WTC11 (cell line): ENCODE measurements at regions of chrX and their contacts with region 1.

Region 1: GRCh38 chrX:152658302-152658701 is 20.6 kb downstream of the GABRQ start:
- DNase-seq: peak; percentile 38
- ATAC-seq: peak; percentile 82
- H3K4me3 Mint-ChIP-seq: no peak overlapping the region
- H3K27ac Mint-ChIP-seq: no peak overlapping the region
- H3K4me1 Mint-ChIP-seq: no peaks in the 10 kb centered on the region
- H3K27me3 Mint-ChIP-seq: no peaks in the 10 kb centered on the region
- CTCF ChIP-seq: no peak

Region 2: GRCh38 chrX:151753313-151754041 is 904.8 kb before region 1 on chrX:
- CTCF ChIA-PET with region 1: interaction called, 10 read pairs
- POLR2A ChIA-PET with region 1: no interaction called
- DNase-seq: peak; percentile 60
- ATAC-seq: peak; percentile 82
- H3K4me3 Mint-ChIP-seq: no peak overlapping the region
- H3K27ac Mint-ChIP-seq: no peak overlapping the region
- H3K4me1 Mint-ChIP-seq: peaks cover 19% of the 10 kb centered on the region
- H3K27me3 Mint-ChIP-seq: peaks cover 6% of the 10 kb centered on the region
- CTCF ChIP-seq: peak; percentile 68

Region 3: DNA sequence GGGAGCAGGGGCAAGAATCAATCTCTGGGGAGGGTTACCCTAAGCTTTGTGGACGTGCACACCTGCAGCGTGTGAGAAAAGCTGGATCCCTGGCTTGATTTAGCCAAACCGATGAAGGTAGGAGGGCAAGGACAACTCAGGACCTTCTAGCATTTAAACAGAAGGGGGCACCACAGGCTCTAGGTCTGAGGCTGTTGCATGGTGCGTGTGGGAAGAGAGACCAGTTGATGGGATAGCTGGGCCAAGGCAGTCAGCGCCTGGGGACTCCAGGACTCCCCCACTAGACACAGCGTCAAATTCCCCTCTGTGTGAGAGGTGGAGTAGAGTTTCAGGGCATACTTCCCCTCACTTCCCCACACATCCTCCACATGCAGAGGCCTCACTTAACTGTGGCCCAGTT is 16.3 kb before region 1 on chrX:
- CTCF ChIA-PET with region 1: interaction called, 41 read pairs
- POLR2A ChIA-PET with region 1: no interaction called
- DNase-seq: peak; percentile 21
- ATAC-seq: peak; percentile 33
- H3K4me3 Mint-ChIP-seq: no peak overlapping the region
- H3K27ac Mint-ChIP-seq: no peak overlapping the region
- H3K4me1 Mint-ChIP-seq: peaks cover 41% of the 10 kb centered on the region
- H3K27me3 Mint-ChIP-seq: peaks cover 16% of the 10 kb centered on the region
- CTCF ChIP-seq: no peak

Region 4: DNA sequence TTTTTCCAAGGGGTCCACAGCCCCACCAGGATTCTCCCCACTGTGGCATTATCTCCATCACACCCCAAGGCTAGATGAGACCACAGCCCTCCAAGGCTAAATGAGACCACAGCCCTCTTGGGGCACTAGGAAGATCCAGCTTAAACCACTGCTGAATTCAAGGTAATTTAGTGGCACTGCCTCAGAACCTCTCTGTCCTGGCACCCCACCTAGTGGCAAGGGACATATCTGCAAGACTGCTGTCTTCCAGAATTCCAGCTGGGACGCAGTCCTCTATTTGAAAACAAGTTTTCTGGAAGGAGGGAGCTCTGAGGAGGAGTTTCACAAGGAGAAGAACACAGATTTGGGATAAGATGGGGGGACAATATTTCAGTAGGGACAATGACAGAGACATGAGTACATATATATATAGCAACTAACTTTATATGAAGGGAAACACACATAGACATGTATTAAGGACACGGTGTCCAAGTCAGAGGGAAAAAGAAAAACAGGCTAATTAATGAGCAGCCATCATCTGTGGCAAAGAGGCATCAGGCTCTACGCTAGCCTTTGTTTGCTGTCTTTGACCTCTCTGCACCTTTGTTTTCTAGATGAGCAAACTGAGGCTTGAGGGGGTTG is 163.0 kb after region 1 on chrX:
- CTCF ChIA-PET with region 1: interaction called, 23 read pairs
- POLR2A ChIA-PET with region 1: no interaction called
- DNase-seq: peak; percentile 65
- ATAC-seq: peak; percentile 85
- H3K4me3 Mint-ChIP-seq: no peak overlapping the region
- H3K27ac Mint-ChIP-seq: no peak overlapping the region
- H3K4me1 Mint-ChIP-seq: peaks cover 10% of the 10 kb centered on the region
- H3K27me3 Mint-ChIP-seq: peaks cover 3% of the 10 kb centered on the region
- CTCF ChIP-seq: peak; percentile 31; the same call in 1 of the 2 replicates